ENCODE measurements at regions of chr9 and their contacts with region 1.

Region 1: DNA sequence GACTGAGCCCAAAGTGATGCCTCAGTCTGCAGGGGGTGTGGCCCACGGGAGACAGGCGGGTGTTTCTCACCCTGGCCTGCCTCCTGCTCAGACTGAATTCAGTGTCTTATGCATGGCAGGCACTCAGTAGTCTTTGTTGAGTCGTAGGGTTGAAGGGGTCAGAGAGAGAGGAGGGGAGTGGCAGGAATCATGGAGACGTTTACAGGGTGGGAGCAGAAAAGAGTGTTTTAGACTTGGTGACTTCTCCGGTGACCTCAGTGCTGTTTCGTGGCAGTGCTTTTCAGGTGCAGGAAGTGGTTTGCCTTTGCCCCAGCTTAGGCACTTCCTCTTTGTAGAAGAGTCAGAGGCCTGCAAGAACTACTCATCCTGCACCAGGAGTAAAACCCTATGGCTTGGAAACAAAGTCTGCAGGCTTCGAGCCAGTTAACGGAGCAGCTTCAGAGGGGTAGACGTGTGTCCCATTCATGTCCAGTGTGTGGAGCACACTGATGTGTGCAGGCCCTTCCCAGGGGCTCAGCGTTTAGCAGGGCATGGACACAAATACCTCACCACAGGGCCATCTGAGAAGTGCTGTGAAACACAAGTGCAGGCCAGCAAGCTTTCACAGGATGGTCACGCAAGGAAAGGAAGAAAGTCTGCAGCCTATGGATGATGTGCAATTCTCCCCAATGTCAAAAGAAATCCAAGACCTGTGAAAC is 24.5 kb upstream of the SEMA4D start:
- DNase-seq: peak; percentile 89
- H3K4me3 Mint-ChIP-seq: peak overlapping the region; percentile 25
- H3K27ac Mint-ChIP-seq: peak overlapping the region; percentile 92
- H3K4me1 Mint-ChIP-seq: peaks cover 97% of the 10 kb centered on the region
- H3K27me3 Mint-ChIP-seq: no peaks in the 10 kb centered on the region

Region 2: DNA sequence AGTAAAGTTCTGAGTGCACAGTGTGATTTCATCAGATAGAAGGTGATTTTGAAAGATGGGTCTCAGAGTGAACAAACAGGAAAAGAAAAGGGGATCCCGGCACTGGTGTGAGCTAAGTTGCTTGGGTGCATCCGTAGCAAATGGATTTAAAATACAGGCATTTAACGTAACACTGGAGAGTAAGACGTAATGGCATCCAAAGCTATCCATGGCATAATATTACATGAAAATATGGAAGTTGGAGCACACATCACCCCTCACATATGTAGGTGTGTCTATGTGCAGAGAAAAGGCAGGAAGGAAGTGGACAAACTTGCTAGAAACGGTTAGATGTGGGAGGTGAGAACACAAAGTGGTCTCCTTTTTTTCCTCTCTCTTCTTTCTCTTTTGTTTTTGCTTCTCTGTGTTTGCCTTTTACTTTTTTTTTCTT is 13.8 kb after region 1 on chr9:
- CTCF ChIA-PET with region 1: interaction called, 19 read pairs
- DNase-seq: no peak
- H3K4me3 Mint-ChIP-seq: peak overlapping the region; percentile 55
- H3K27ac Mint-ChIP-seq: peak overlapping the region; percentile 95
- H3K4me1 Mint-ChIP-seq: peaks cover 88% of the 10 kb centered on the region
- H3K27me3 Mint-ChIP-seq: no peaks in the 10 kb centered on the region

Region 3: DNA sequence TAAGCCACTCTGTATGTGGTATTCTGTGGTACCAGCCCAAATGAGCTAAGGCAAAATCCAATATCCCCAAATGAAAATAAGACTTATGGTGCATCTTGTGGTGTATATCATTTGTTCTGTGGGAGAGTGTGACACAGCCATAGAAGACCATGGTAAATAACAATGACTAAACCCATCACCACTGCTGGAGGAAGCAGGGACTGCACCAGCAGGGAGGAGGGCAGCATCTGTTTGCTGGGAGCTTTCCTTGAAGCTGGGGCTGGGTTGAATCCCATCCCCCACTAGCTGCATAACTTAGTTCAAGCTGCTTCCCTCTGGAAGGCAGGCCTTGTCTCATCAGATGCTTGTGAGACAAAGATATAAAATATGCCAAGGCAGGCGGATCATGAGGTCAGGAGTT is 96.6 kb after region 1 on chr9:
- CTCF ChIA-PET with region 1: no interaction called
- DNase-seq: no peak
- H3K4me3 Mint-ChIP-seq: no peak overlapping the region
- H3K27ac Mint-ChIP-seq: no peak overlapping the region
- H3K4me1 Mint-ChIP-seq: no peaks in the 10 kb centered on the region
- H3K27me3 Mint-ChIP-seq: peaks cover 64% of the 10 kb centered on the region